ENCODE measurements at regions of chr1 and their contacts with region 1.

Region 1: GRCh38 chr1:15617175-15617880 is at the start of gene DDI2:
- DNase-seq: peak; percentile 99
- H3K4me3 ChIP-seq: peak within 1 kb of the TSS; percentile 68 to 90 (median 82)
- H3K27ac ChIP-seq: peak within 1 kb of the TSS; percentile 91 to 97 (median 95)
- H3K4me1 ChIP-seq: peaks cover 38 to 51% (median 50%) of the 10 kb centered on the region in 4 donors
- H3K27me3 ChIP-seq: no peaks in the 10 kb centered on the region
- CTCF ChIP-seq: no peak
- EP300 ChIP-seq: no peak
- POLR2A ChIP-seq: peak; percentile 70
- total RNA-seq, gene DDI2: 14.4 to 24.9 (median 17.2) TPM

Region 2: GRCh38 chr1:15459771-15460719 is 157.3 kb before region 1 on chr1:
- intact Hi-C with region 1: no loop called
- DNase-seq: no peak
- H3K4me3 ChIP-seq: no peak overlapping the region
- H3K27ac ChIP-seq: no peak overlapping the region
- H3K4me1 ChIP-seq: peaks cover 0 to 11% (median 10%) of the 10 kb centered on the region in 4 donors
- H3K27me3 ChIP-seq: no peaks in the 10 kb centered on the region
- CTCF ChIP-seq: no peak
- EP300 ChIP-seq: no peak
- POLR2A ChIP-seq: no peak

Region 3: GRCh38 chr1:15526490-15527339 is 90.6 kb before region 1 on chr1 and contains the start of gene DNAJC16:
- intact Hi-C with region 1: loop called (anchors 5 kb)
- DNase-seq: peak; percentile 100
- H3K4me3 ChIP-seq: peak within 1 kb of the TSS; percentile 90 to 97 (median 94)
- H3K27ac ChIP-seq: peak within 1 kb of the TSS; percentile 92 to 97 (median 96)
- H3K4me1 ChIP-seq: peaks cover 26 to 42% (median 41%) of the 10 kb centered on the region in 4 donors
- H3K27me3 ChIP-seq: no peaks in the 10 kb centered on the region
- CTCF ChIP-seq: peak in 2 of 3 experiments; percentile 19 to 24
- EP300 ChIP-seq: no peak
- POLR2A ChIP-seq: peak; percentile 60
- total RNA-seq, gene DNAJC16: 12.0 to 13.0 (median 12.4) TPM

Region 4: GRCh38 chr1:15684468-15685291 is 67.4 kb after region 1 on chr1:
- intact Hi-C with region 1: loop called (anchors 5 kb)
- DNase-seq: no peak
- H3K4me3 ChIP-seq: peak overlapping the region; percentile 69 to 96 (median 88)
- H3K27ac ChIP-seq: peak overlapping the region; percentile 89 to 96 (median 94)
- H3K4me1 ChIP-seq: peaks cover 17 to 45% (median 36%) of the 10 kb centered on the region in 4 donors
- H3K27me3 ChIP-seq: no peaks in the 10 kb centered on the region
- CTCF ChIP-seq: peak in 1 of 3 experiments; percentile 27
- EP300 ChIP-seq: no peak
- POLR2A ChIP-seq: no peak